ENCODE measurements at regions of chr11 and their contacts with region 1.

Region 1: DNA sequence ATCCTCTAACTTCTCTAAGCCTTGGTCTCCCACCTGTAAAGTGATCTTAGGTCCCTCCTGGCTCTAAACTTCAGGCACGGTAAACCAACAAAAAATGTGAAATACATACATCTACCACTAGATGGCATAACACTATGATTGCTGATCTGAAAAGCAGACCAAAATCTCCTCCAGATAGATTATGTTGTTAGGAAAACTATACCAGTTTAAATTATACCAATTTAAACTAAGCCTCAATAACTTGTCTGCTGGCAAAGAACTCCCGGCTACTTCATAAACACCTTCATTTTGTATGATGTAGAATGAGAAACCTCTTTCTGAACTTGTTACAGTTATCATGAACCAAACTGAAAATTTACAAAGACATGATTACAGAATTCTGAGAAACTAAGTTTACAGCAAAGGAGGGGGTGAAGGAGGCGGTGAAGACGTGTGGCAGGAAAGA is 85.9 kb downstream of the SBF2 start:
- DNase-seq: peak; percentile 54 to 58
- ATAC-seq: peak; percentile 76 to 87; a peak in 5 of 6 replicates
- H3K4me3 ChIP-seq: no peak overlapping the region
- H3K27ac ChIP-seq: no peak overlapping the region
- H3K4me1 ChIP-seq: 0 out of 3 replicates have a peak, but pooled peaks cover 5% of the 10 kb centered on the region
- CTCF ChIP-seq: peak; percentile 80
- EP300 ChIP-seq: no peak
- POLR2A ChIP-seq: no peak
- RAD21 ChIP-seq: peak; percentile 63 to 69

Region 2: GRCh38 chr11:10197091-10197490 is 11.1 kb before region 1 on chr11:
- CTCF ChIA-PET with region 1: interaction called, 15 read pairs
- POLR2A ChIA-PET with region 1: no interaction called
- DNase-seq: no peak
- ATAC-seq: no peak
- H3K4me3 ChIP-seq: no peak overlapping the region
- H3K27ac ChIP-seq: no peak overlapping the region
- H3K4me1 ChIP-seq: no peaks in the 10 kb centered on the region
- CTCF ChIP-seq: no peak
- EP300 ChIP-seq: no peak
- POLR2A ChIP-seq: no peak
- RAD21 ChIP-seq: no peak

Region 3: GRCh38 chr11:10225553-10225952 is 17.4 kb after region 1 on chr11:
- CTCF ChIA-PET with region 1: interaction called, 13 read pairs
- POLR2A ChIA-PET with region 1: no interaction called
- DNase-seq: no peak
- ATAC-seq: no peak
- H3K4me3 ChIP-seq: no peak overlapping the region
- H3K27ac ChIP-seq: no peak overlapping the region
- H3K4me1 ChIP-seq: no peaks in the 10 kb centered on the region
- CTCF ChIP-seq: no peak
- EP300 ChIP-seq: no peak
- POLR2A ChIP-seq: no peak
- RAD21 ChIP-seq: no peak

Region 4: DNA sequence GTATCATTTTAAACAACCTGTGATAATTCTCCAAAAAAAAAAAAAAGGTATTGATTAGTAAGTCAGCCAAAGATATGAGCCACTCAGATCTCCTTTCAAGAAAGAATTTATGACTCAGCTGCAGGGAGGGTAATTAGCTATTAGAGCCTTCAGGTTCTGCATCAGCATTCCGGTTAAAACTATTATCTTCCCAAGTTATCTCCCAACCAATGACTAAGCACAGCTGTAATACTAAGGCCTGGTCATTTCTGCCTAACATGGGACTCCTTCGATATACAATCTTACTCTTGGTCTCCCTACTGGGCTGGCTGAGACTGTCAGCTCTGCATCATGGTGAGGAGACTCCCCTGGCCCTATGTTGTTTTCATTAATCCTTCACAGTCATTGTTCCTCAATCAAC is 25.4 kb after region 1 on chr11:
- CTCF ChIA-PET with region 1: interaction called, 10 read pairs
- POLR2A ChIA-PET with region 1: no interaction called
- DNase-seq: no peak
- ATAC-seq: no peak
- H3K4me3 ChIP-seq: no peak overlapping the region
- H3K27ac ChIP-seq: no peak overlapping the region
- H3K4me1 ChIP-seq: peaks cover 6% of the 10 kb centered on the region; the same call in 2 of the 3 replicates
- CTCF ChIP-seq: no peak
- EP300 ChIP-seq: no peak
- POLR2A ChIP-seq: no peak
- RAD21 ChIP-seq: no peak

Region 5: DNA sequence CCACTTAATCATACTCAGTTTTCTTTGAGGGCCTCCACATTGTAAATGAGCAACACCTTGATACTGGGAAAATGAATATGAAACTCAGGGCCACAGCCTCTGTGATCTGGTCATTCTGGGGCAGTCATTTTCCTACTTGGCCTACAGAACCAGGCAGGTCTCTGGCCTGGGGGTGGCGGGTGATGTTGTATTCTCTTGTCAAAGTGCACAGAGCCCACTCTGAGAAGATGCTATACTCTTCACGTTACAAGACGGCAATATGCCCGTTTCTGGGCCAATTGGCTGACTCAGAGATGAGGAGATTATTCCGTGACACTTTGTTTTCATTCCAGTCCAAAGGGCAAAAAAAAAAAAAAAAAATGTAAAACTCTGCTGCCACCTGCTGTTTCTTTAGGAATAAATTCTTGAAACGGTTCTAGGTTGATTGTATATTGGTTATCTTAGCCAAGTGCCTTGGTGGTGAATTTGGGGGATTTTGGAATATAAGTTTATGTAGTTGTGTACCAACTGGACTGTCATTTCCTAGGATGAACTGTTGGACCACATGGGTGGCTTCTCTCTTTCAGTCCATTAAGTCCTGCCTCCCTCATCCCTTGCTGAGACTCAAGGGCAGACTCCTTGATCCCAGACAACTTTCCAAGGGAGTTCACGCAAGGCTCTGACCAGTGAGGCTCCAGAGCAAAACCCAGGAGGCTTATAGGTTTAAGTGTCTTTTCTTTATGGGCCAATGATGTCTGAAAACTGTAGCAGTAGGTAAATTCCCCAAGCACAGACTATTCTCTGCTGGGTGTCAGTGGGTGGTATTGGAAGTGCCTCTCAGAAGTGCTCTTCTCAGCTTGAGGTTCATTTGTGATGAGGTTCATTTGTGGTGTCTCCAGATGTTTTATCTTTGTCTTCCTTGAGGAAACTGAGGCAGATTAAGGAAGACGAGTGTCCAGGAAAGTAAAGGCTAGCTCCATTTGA is 115.0 kb after region 1 on chr11:
- CTCF ChIA-PET with region 1: interaction called, 21 read pairs
- POLR2A ChIA-PET with region 1: no interaction called
- DNase-seq: peak; percentile 65 to 87
- ATAC-seq: peak; percentile 79 to 80
- H3K4me3 ChIP-seq: peak overlapping the region; percentile 3; the same call in 1 of the 3 replicates
- H3K27ac ChIP-seq: peak overlapping the region; percentile 73 to 84
- H3K4me1 ChIP-seq: peaks cover 65% of the 10 kb centered on the region
- CTCF ChIP-seq: peak; percentile 73
- EP300 ChIP-seq: no peak
- POLR2A ChIP-seq: no peak
- RAD21 ChIP-seq: peak; percentile 84 to 89

Region 6: GRCh38 chr11:10366568-10367370 is 158.6 kb after region 1 on chr11:
- CTCF ChIA-PET with region 1: interaction called, 10 read pairs
- POLR2A ChIA-PET with region 1: no interaction called
- DNase-seq: peak; percentile 78 to 96
- ATAC-seq: peak; percentile 97 to 98
- H3K4me3 ChIP-seq: no peak overlapping the region
- H3K27ac ChIP-seq: peak overlapping the region; percentile 78 to 84
- H3K4me1 ChIP-seq: peaks cover 15% of the 10 kb centered on the region
- CTCF ChIP-seq: peak; percentile 86
- EP300 ChIP-seq: peak in 1 of 2 experiments; percentile 42; a peak in 1 of 5 replicates
- POLR2A ChIP-seq: no peak
- RAD21 ChIP-seq: peak; percentile 91 to 96

Region 7: GRCh38 chr11:10415817-10416392 is 207.8 kb after region 1 on chr11:
- CTCF ChIA-PET with region 1: no interaction called
- POLR2A ChIA-PET with region 1: no interaction called
- DNase-seq: no peak
- ATAC-seq: no peak
- H3K4me3 ChIP-seq: no peak overlapping the region
- H3K27ac ChIP-seq: no peak overlapping the region
- H3K4me1 ChIP-seq: no peaks in the 10 kb centered on the region
- CTCF ChIP-seq: no peak
- EP300 ChIP-seq: no peak
- POLR2A ChIP-seq: no peak
- RAD21 ChIP-seq: no peak